ENCODE measurements at regions of chr10 and their contacts with region 1.

Region 1: GRCh38 chr10:14385596-14386593 is 55.2 kb upstream of the FRMD4A start:
- DNase-seq: peak; percentile 78
- ATAC-seq: peak; percentile 74
- H3K4me3 Mint-ChIP-seq: no peak overlapping the region
- H3K27ac Mint-ChIP-seq: no peak overlapping the region
- H3K4me1 Mint-ChIP-seq: peaks cover 74% of the 10 kb centered on the region
- H3K27me3 Mint-ChIP-seq: peaks cover 13% of the 10 kb centered on the region

Region 2: DNA sequence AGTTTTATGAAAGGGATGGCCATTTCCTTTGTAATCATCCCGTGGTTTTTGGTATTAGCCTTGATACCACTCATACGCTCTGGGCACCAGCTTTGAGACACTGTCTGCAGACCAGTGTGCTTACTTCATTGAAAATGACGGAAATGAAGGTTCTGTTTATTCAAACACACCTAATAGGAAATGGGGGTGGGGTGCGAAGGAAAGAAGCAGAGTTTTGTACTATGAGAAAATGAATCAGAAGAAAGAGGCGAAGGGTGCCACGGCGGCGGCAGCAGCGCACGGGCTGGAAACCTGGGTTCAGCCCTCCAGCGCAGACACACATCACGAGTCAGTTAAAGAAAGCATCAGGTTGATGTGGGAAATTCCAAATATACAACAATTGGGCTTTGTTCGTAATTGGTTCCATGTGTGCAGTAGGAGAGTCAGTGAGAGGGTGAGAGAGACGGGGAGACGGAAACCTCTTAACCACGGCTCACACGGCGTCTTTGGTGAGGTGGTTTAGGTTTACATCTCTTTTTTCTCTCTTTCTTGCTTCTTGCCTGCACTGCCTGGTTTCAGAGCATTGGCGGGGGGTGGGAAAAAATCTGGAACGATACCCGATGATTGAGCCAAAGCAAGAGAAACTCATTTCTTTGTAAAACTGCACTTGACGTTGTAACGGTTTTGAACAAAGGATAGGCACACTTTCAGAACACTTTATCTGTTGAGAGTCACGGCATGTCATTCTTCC is 376.4 kb before region 1 on chr10:
- CTCF ChIA-PET with region 1: no interaction called
- POLR2A ChIA-PET with region 1: no interaction called
- intact Hi-C with region 1: loop called in 1 of 2 experiments (anchors 5 kb)
- DNase-seq: peak; percentile 84
- ATAC-seq: peak; percentile 88
- H3K4me3 Mint-ChIP-seq: peak overlapping the region; percentile 75
- H3K27ac Mint-ChIP-seq: peak overlapping the region; percentile 92
- H3K4me1 Mint-ChIP-seq: peaks cover 41% of the 10 kb centered on the region
- H3K27me3 Mint-ChIP-seq: peaks cover 3% of the 10 kb centered on the region

Region 3: DNA sequence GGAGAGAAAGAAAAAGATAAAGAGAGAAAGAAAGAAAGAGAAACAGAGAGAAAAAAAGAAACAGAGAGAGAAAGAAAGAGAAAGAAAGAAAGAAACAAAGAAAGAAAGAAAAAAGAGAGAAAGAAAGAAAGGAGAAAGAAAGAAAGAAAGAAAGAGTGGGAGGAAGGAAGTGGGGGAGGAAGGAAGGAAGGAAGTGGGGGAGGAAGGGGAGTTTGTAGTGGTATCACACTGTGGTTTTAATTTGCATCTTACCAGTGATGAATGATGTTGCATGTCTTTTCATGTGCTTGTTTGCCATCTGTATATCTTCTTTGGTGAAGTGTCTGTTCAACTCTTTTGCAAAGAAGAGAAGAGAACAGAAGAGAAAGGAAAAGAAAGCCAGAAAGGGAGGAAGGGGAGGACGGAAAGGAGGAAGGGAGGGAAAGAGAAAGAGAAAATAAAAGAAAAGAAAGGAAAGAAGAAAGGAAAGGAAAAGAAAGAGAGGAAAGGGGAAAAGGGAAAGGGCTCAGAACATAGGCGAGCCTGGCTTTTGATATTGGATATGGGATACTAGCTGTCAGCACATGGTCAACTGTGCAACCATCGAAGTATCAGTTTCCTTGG is 24.1 kb after region 1 on chr10:
- CTCF ChIA-PET with region 1: interaction called, 3 read pairs
- POLR2A ChIA-PET with region 1: interaction called, 3 read pairs
- intact Hi-C with region 1: loop called (anchors 1 kb)
- DNase-seq: no peak
- ATAC-seq: no peak
- H3K4me3 Mint-ChIP-seq: no peak overlapping the region
- H3K27ac Mint-ChIP-seq: peak overlapping the region; percentile 81
- H3K4me1 Mint-ChIP-seq: peaks cover 22% of the 10 kb centered on the region
- H3K27me3 Mint-ChIP-seq: peaks cover 47% of the 10 kb centered on the region

Region 4: GRCh38 chr10:14665304-14665703 is 279.4 kb after region 1 on chr10:
- CTCF ChIA-PET with region 1: interaction called, 4 read pairs
- POLR2A ChIA-PET with region 1: no interaction called
- intact Hi-C with region 1: loop called (anchors 1 to 2 kb)
- DNase-seq: peak; percentile 43
- ATAC-seq: peak; percentile 81
- H3K4me3 Mint-ChIP-seq: no peak overlapping the region
- H3K27ac Mint-ChIP-seq: peak overlapping the region; percentile 59
- H3K4me1 Mint-ChIP-seq: peaks cover 60% of the 10 kb centered on the region
- H3K27me3 Mint-ChIP-seq: no peaks in the 10 kb centered on the region

Region 5: GRCh38 chr10:14889318-14889717 is 503.4 kb after region 1 on chr10:
- CTCF ChIA-PET with region 1: no interaction called
- POLR2A ChIA-PET with region 1: no interaction called
- intact Hi-C with region 1: loop called in 1 of 2 experiments (anchors 10 kb)
- DNase-seq: no peak
- ATAC-seq: peak; percentile 36
- H3K4me3 Mint-ChIP-seq: no peak overlapping the region
- H3K27ac Mint-ChIP-seq: no peak overlapping the region
- H3K4me1 Mint-ChIP-seq: peaks cover 7% of the 10 kb centered on the region
- H3K27me3 Mint-ChIP-seq: no peaks in the 10 kb centered on the region

Region 6: DNA sequence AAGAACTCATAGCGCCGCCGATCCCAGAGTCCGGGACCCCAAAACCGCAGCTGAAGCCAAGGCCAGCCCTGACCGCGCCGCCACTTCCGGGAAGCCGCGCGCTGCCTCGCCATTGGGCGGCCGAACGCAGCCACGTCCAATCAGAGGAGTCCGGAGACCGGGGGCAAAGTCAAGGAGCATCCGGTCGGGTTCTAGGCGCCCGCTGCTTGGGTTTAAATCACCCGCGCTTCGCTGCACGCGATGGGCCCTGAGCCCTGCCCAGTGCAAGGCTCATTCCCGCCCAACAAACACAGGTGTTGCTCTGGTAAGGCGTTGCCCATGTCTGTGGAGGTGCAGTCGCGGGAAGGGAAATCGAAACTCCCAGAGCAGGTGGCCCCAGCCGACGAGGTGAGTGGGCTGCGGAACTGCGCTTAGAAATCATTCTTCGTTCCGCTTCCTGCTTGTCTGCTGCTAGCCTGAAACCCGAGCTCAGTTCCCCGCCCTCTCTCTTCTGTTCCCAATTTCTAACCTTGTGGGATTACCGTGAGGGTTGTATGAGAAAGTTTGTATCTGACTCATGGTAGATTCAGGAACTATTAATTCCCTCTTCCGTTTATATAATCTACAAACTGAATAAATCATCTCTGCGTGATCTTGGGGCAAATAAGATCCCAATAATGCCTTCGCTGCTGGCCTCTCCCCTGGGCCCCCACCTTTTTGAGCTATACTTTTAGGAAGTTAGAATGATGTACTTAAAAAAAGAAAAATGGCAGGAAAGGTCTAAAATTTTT is 568.3 kb after region 1 on chr10 and contains the start of gene DCLRE1C:
- CTCF ChIA-PET with region 1: no interaction called
- POLR2A ChIA-PET with region 1: no interaction called
- intact Hi-C with region 1: loop called in 1 of 2 experiments (anchors 1 kb)
- DNase-seq: peak; percentile 94
- ATAC-seq: peak; percentile 94
- H3K4me3 Mint-ChIP-seq: peak within 1 kb of the TSS; percentile 90
- H3K27ac Mint-ChIP-seq: peak within 1 kb of the TSS; percentile 97
- H3K4me1 Mint-ChIP-seq: peaks cover 52% of the 10 kb centered on the region
- H3K27me3 Mint-ChIP-seq: no peaks in the 10 kb centered on the region
- total RNA-seq, gene DCLRE1C: 17.9 to 30.9 TPM

Region 7: GRCh38 chr10:15141136-15142054 is 755.5 kb after region 1 on chr10:
- CTCF ChIA-PET with region 1: no interaction called
- POLR2A ChIA-PET with region 1: no interaction called
- intact Hi-C with region 1: loop called in 1 of 2 experiments (anchors 5 kb)
- DNase-seq: peak; percentile 67
- ATAC-seq: peak; percentile 86
- H3K4me3 Mint-ChIP-seq: peak overlapping the region; percentile 69
- H3K27ac Mint-ChIP-seq: peak overlapping the region; percentile 83
- H3K4me1 Mint-ChIP-seq: peaks cover 51% of the 10 kb centered on the region
- H3K27me3 Mint-ChIP-seq: no peaks in the 10 kb centered on the region

Measured in activated CD4-positive, alpha-beta T cell treated with anti-CD3 and anti-CD28 coated beads for 36 hours (primary cell).